Aorta (tissue), 5 donors: ENCODE measurements at regions of chr10 and their contacts with region 1.

Region 1: DNA sequence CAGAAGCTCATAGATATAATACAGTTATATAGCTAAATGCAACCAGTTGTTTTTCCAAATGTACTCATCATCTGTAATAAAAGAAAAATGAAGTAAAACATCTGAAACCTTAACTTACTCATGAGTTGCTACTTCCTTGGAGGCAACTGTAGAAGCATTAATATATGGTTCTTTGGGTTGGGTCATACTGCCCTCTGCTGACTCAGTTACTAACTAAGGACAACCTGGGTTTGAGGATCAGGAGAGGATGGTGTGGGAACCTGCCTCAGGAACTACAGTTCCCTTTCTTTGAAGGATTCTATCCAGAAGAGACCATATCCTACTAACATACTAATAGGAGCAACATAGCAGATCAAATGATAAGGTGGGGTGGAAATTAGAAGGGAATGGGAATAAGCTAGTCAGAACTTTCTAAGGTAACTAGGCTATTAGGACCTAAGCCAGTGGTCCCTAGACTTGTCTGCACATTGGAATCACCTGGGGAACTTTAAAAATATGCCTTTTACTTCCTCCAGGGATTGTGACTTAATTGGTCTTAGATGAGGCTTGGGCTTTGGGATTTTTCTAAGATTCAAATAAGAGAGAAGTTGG is 20.7 kb downstream of the COX15 start:
- DNase-seq: no peak
- ATAC-seq: peak; percentile 80
- H3K4me3 ChIP-seq: no peak overlapping the region
- H3K27ac ChIP-seq: no peak overlapping the region
- H3K4me1 ChIP-seq: no peaks in the 10 kb centered on the region
- H3K27me3 ChIP-seq: no peaks in the 10 kb centered on the region

Region 2: GRCh38 chr10:99394761-99395386 is 316.4 kb before region 1 on chr10:
- intact Hi-C with region 1: loop called in 1 of 2 experiments (anchors 5 kb)
- DNase-seq: no peak
- ATAC-seq: no peak
- H3K4me3 ChIP-seq: no peak overlapping the region
- H3K27ac ChIP-seq: no peak overlapping the region
- H3K4me1 ChIP-seq: no peaks in the 10 kb centered on the region
- H3K27me3 ChIP-seq: no peaks in the 10 kb centered on the region